ENCODE measurements at regions of chr12 and their contacts with region 1.

Region 1: GRCh38 chr12:92145731-92146496 is at the start of gene BTG1:
- DNase-seq: peak; percentile 100
- ATAC-seq: peak; percentile 77
- H3K4me3 ChIP-seq: peak within 1 kb of the TSS; percentile 87
- H3K27ac ChIP-seq: peak within 1 kb of the TSS; percentile 73
- H3K4me1 ChIP-seq: peaks cover 13% of the 10 kb centered on the region
- H3K27me3 ChIP-seq: no peaks in the 10 kb centered on the region
- CTCF ChIP-seq: no peak
- total RNA-seq, gene BTG1: 16.0 and 29.8 TPM in 2 replicates

Region 2: GRCh38 chr12:91382081-91382543 is 763.8 kb before region 1 on chr12:
- CTCF ChIA-PET with region 1: interaction called, 13 read pairs
- POLR2A ChIA-PET with region 1: interaction called, 7 read pairs
- intact Hi-C with region 1: loop called (anchors 1 kb)
- DNase-seq: peak; percentile 90
- ATAC-seq: peak; percentile 84
- H3K4me3 ChIP-seq: peak overlapping the region; percentile 49
- H3K27ac ChIP-seq: 0 out of 2 replicates have a peak overlapping the region, but pooled peaks have one; percentile 6
- H3K4me1 ChIP-seq: peaks cover 6% of the 10 kb centered on the region; the same call in 1 of the 2 replicates
- H3K27me3 ChIP-seq: no peaks in the 10 kb centered on the region
- CTCF ChIP-seq: peak; percentile 94

Region 3: GRCh38 chr12:91577586-91578539 is 568.1 kb before region 1 on chr12:
- CTCF ChIA-PET with region 1: no interaction called
- POLR2A ChIA-PET with region 1: no interaction called
- intact Hi-C with region 1: loop called (anchors 1 kb)
- DNase-seq: peak; percentile 66
- ATAC-seq: no peak
- H3K4me3 ChIP-seq: peak overlapping the region; percentile 66
- H3K27ac ChIP-seq: peak overlapping the region; percentile 95
- H3K4me1 ChIP-seq: peaks cover 45% of the 10 kb centered on the region
- H3K27me3 ChIP-seq: no peaks in the 10 kb centered on the region
- CTCF ChIP-seq: peak; percentile 74

Region 4: GRCh38 chr12:91818227-91819131 is 327.4 kb before region 1 on chr12:
- CTCF ChIA-PET with region 1: no interaction called
- POLR2A ChIA-PET with region 1: no interaction called
- intact Hi-C with region 1: loop called (anchors 2 kb)
- DNase-seq: no peak
- ATAC-seq: no peak
- H3K4me3 ChIP-seq: no peak overlapping the region
- H3K27ac ChIP-seq: peak overlapping the region; percentile 35; the same call in 1 of the 2 replicates
- H3K4me1 ChIP-seq: peaks cover 19% of the 10 kb centered on the region
- H3K27me3 ChIP-seq: no peaks in the 10 kb centered on the region
- CTCF ChIP-seq: no peak

Region 5: GRCh38 chr12:91947459-91947858 is 198.5 kb before region 1 on chr12:
- CTCF ChIA-PET with region 1: no interaction called
- POLR2A ChIA-PET with region 1: no interaction called
- intact Hi-C with region 1: no loop called
- DNase-seq: no peak
- ATAC-seq: no peak
- H3K4me3 ChIP-seq: no peak overlapping the region
- H3K27ac ChIP-seq: no peak overlapping the region
- H3K4me1 ChIP-seq: no peaks in the 10 kb centered on the region
- H3K27me3 ChIP-seq: no peaks in the 10 kb centered on the region
- CTCF ChIP-seq: no peak

Region 6: GRCh38 chr12:91985002-91985787 is 160.7 kb before region 1 on chr12:
- CTCF ChIA-PET with region 1: no interaction called
- POLR2A ChIA-PET with region 1: no interaction called
- intact Hi-C with region 1: loop called (anchors 5 kb)
- DNase-seq: no peak
- ATAC-seq: no peak
- H3K4me3 ChIP-seq: no peak overlapping the region
- H3K27ac ChIP-seq: no peak overlapping the region
- H3K4me1 ChIP-seq: peaks cover 27% of the 10 kb centered on the region
- H3K27me3 ChIP-seq: no peaks in the 10 kb centered on the region
- CTCF ChIP-seq: no peak

Region 7: DNA sequence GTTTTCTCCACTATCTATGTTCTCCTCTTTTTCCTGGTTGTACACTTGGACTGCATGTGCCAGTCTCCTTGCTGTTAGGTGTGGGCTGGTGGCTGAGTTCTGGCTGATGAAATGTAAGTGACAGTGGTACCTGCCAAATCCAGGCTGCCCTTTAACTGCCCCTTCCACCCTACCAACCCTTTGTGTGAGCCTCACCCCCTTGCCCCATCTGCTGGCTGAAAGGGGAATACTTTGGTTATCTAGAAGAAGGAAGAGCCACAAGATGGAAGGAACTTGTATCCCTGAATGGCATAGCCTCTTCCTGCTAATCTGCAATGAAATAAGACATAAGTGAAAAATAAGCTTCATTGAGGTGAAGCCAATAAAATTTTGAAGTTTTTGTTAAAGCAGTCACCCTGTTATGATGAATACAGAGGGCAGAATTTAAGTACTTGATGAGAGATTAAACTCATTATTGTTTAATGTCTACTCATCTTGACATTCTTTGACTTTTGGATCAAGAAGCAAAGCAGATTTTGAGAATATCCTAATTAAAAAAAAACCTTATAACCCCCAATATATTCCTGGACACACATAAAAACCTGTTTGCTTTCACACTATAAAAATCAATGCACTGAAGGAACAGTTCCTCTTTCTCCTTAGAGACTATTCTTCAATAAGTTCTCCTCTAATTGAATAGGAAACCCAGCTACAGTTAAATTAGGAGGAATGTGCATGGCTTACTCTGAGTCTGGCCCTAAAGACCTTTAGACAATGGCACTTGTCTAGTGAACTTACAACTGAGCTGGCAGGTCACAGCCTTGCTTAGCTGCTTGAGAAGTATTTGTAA is 262.4 kb after region 1 on chr12:
- CTCF ChIA-PET with region 1: no interaction called
- POLR2A ChIA-PET with region 1: interaction called, 5 read pairs
- intact Hi-C with region 1: loop called (anchors 1 kb)
- DNase-seq: peak; percentile 76
- ATAC-seq: peak; percentile 71
- H3K4me3 ChIP-seq: no peak overlapping the region
- H3K27ac ChIP-seq: no peak overlapping the region
- H3K4me1 ChIP-seq: no peaks in the 10 kb centered on the region
- H3K27me3 ChIP-seq: no peaks in the 10 kb centered on the region
- CTCF ChIP-seq: peak; percentile 87

Region 8: GRCh38 chr12:92570056-92570753 is 424.3 kb after region 1 on chr12:
- CTCF ChIA-PET with region 1: no interaction called
- POLR2A ChIA-PET with region 1: interaction called, 16 read pairs
- intact Hi-C with region 1: loop called (anchors 1 kb)
- DNase-seq: peak; percentile 91
- ATAC-seq: peak; percentile 68
- H3K4me3 ChIP-seq: no peak overlapping the region
- H3K27ac ChIP-seq: no peak overlapping the region
- H3K4me1 ChIP-seq: peaks cover 16% of the 10 kb centered on the region
- H3K27me3 ChIP-seq: no peaks in the 10 kb centered on the region
- CTCF ChIP-seq: peak; percentile 91